Mammary epithelial cell (primary cell): ENCODE measurements at regions of chr5 and their contacts with region 1.

Region 1: DNA sequence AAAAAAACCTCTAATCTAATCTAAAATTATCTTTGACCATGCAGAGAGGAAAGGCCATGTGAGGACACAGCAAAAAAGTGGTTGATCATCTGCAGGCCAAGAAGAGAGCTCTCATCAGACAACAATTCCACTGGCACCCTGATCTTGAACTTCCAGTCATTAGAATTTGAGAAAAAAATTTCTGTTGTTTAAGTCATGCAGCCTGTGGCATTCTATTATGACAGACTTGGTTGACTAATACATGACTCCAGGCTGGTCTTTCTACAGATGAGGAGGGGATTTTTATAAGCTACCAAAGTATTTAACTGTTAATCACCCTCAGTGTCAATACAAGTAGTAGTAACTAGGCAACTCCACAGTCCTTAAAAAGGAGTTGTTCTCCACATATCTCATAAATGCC is 358.5 kb upstream of the RGMB start:
- DNase-seq: peak; percentile 90
- H3K4me3 ChIP-seq: no peak overlapping the region
- H3K27ac ChIP-seq: peak overlapping the region; percentile 95
- H3K4me1 ChIP-seq: peaks cover 32% of the 10 kb centered on the region
- H3K27me3 ChIP-seq: no peaks in the 10 kb centered on the region
- CTCF ChIP-seq: no peak

Region 2: GRCh38 chr5:98454904-98455303 is 40.0 kb after region 1 on chr5:
- CTCF ChIA-PET with region 1: no interaction called
- dilution Hi-C with region 1: no loop called
- in situ Hi-C with region 1: no loop called
- intact Hi-C with region 1: loop called (anchors 1 kb)
- DNase-seq: peak; percentile 88
- H3K4me3 ChIP-seq: no peak overlapping the region
- H3K27ac ChIP-seq: peak overlapping the region; percentile 52
- H3K4me1 ChIP-seq: peaks cover 11% of the 10 kb centered on the region
- H3K27me3 ChIP-seq: no peaks in the 10 kb centered on the region
- CTCF ChIP-seq: peak; percentile 24 to 56

Region 3: DNA sequence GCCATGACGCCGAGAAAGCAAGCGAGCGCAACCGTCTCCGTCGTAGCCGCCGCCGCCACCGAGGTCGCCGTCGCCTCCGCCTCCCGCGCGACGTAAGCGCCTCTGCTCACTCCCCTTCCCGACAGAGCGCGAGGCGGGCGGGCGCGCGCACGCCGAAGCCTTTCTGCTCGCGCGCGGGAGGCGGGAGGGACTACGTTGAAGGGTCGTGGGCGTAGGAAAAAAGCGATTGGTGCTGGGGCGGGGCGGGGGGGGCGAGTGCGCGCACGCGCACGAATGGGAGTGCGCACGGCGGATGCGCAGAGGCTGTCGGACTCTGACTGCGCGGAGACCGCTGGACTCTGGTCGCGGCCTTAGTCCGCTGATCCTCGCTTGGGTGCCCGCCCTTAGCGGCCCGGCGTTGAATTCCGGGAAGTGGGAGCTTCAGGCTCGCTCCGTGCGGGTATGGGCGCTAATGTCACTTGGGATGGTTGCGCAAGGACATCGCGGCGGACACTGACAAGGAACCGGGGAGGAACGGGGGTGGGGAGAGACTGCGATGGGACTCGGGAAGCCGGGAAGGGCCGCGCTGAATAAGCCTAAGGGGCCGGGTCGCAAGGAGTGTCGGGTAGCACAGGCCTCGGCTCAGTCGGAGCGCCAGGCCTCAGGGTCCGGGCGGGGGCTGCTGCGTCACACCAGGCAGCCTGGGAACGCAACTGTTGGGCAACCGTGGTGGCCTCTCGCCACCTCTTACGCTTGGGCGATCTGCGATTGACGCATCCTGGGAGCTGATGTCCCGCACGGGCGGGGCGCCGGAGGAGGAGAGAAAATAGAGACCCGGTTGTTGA is 514.1 kb after region 1 on chr5 and contains the start of gene CHD1:
- CTCF ChIA-PET with region 1: no interaction called
- dilution Hi-C with region 1: no loop called
- in situ Hi-C with region 1: no loop called
- intact Hi-C with region 1: loop called (anchors 2 kb)
- DNase-seq: peak; percentile 97
- H3K4me3 ChIP-seq: peak within 1 kb of the TSS; percentile 63 to 93 (median 80)
- H3K27ac ChIP-seq: peak within 1 kb of the TSS; percentile 93
- H3K4me1 ChIP-seq: peaks cover 13% of the 10 kb centered on the region
- H3K27me3 ChIP-seq: no peaks in the 10 kb centered on the region
- CTCF ChIP-seq: no peak
- total RNA-seq, gene CHD1: 34.9 to 39.8 TPM